ENCODE measurements at regions of chr3 and their contacts with region 1.

Region 1: DNA sequence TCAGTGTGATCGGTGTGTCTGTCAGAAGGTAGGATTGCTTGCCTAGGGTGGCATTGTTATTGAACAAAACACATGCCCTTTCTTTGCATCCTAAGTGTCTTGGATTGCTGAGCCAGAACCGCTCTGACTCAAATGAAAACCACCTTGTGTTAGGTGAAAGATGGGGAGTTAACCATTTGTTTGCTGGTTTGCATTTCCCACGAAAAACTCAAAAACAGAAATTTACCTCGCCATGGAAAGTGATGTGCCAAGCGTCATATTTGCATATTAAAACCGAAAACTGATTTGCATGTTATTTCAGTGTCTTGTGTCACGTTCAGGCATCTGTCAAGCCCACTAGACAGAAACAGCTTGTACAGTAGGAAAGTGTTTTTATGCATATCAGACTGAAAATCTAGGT is 474.6 kb upstream of the TPRG1 start:
- DNase-seq: peak; percentile 54
- ATAC-seq: peak; percentile 42
- H3K4me3 Mint-ChIP-seq: no peak overlapping the region
- H3K27ac Mint-ChIP-seq: no peak overlapping the region
- H3K4me1 Mint-ChIP-seq: peaks cover 47% of the 10 kb centered on the region
- H3K27me3 Mint-ChIP-seq: peaks cover 2% of the 10 kb centered on the region

Region 2: DNA sequence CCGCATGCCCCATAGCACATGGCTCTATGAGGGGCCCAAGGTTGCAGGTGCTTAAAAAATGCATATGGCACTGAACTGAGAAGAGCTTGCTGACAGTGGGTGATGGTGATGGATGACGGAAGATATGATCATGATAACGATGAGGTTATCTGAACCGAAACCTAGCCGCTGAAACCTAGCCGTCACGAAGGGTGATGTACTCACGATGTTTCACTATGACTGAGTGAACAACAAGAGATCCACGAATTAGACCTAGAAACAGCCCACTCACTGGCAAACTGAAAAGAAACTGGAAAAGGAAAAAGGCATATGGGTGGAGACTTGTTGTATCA is 894.2 kb before region 1 on chr3:
- CTCF ChIA-PET with region 1: no interaction called
- POLR2A ChIA-PET with region 1: no interaction called
- intact Hi-C with region 1: loop called in 1 of 2 experiments (anchors 10 kb)
- DNase-seq: peak; percentile 86
- ATAC-seq: peak; percentile 60
- H3K4me3 Mint-ChIP-seq: peak overlapping the region; percentile 34
- H3K27ac Mint-ChIP-seq: peak overlapping the region; percentile 81
- H3K4me1 Mint-ChIP-seq: peaks cover 93% of the 10 kb centered on the region
- H3K27me3 Mint-ChIP-seq: no peaks in the 10 kb centered on the region

Region 3: GRCh38 chr3:188309437-188310269 is 387.5 kb before region 1 on chr3:
- CTCF ChIA-PET with region 1: no interaction called
- POLR2A ChIA-PET with region 1: no interaction called
- intact Hi-C with region 1: loop called in 1 of 2 experiments (anchors 1 kb)
- DNase-seq: peak; percentile 50
- ATAC-seq: peak; percentile 85
- H3K4me3 Mint-ChIP-seq: peak overlapping the region; percentile 9
- H3K27ac Mint-ChIP-seq: peak overlapping the region; percentile 80
- H3K4me1 Mint-ChIP-seq: peaks cover 26% of the 10 kb centered on the region
- H3K27me3 Mint-ChIP-seq: no peaks in the 10 kb centered on the region

Region 4: GRCh38 chr3:188584162-188584529 is 113.0 kb before region 1 on chr3:
- CTCF ChIA-PET with region 1: no interaction called
- POLR2A ChIA-PET with region 1: no interaction called
- intact Hi-C with region 1: loop called (anchors 1 to 5 kb)
- DNase-seq: peak; percentile 43
- ATAC-seq: peak; percentile 60
- H3K4me3 Mint-ChIP-seq: no peak overlapping the region
- H3K27ac Mint-ChIP-seq: no peak overlapping the region
- H3K4me1 Mint-ChIP-seq: peaks cover 12% of the 10 kb centered on the region
- H3K27me3 Mint-ChIP-seq: no peaks in the 10 kb centered on the region

Region 5: DNA sequence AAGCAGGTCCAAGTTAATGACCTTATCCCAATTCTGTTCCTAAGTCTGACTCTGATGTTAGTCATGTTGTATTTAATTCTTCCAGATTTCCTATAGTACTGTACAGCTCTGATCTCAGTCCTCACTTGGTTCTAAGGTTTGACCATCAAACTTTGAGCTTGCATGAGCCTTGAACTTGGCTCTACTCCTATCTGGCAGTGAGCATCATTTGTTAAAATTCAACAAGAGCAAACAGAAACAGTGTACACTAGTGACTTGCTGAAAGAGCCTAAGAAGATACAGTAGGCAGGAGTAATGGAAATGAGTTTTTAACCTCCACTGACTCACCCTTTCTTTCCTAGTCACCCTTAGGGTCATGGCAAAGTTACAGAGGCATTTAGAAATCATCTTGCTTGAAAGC is 23.5 kb after region 1 on chr3:
- CTCF ChIA-PET with region 1: no interaction called
- POLR2A ChIA-PET with region 1: no interaction called
- intact Hi-C with region 1: loop called (anchors 1 kb)
- DNase-seq: no peak
- ATAC-seq: peak; percentile 83
- H3K4me3 Mint-ChIP-seq: no peak overlapping the region
- H3K27ac Mint-ChIP-seq: no peak overlapping the region
- H3K4me1 Mint-ChIP-seq: peaks cover 37% of the 10 kb centered on the region
- H3K27me3 Mint-ChIP-seq: peaks cover 9% of the 10 kb centered on the region